ENCODE measurements at regions of chr11 and their contacts with region 1.

Region 1: DNA sequence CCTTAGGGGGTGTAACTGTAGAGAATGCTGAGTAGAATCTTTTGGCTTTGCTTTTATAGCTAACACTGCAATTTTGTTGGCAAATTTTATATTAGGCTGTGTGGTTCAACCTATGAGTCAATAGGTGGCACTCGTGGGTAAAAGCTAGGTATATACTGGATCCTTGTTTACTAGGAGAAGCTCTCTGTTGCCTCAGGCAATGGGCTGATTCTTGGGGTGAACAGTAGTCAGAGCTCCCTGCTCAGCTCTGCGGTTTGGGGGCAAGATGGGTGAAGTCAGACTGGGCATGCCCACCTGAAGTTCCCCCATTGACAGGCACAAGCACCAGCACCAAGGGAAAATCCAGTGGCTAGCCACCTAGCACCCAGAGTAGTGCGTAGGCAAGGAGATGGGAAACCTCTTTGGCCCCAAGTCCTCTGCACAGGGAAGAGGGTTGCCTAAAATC is 238.7 kb downstream of the FAM181B start:
- DNase-seq: peak in 1 of 2 experiments; percentile 51
- H3K4me3 ChIP-seq: no peak overlapping the region
- H3K27ac ChIP-seq: peak overlapping the region; percentile 62; the same call in 1 of the 2 replicates
- H3K4me1 ChIP-seq: 0 out of 7 replicates have a peak, but pooled peaks cover 0 to 2% (median 0%) of the 10 kb centered on the region in 4 experiments
- H3K27me3 ChIP-seq: no peaks in the 10 kb centered on the region
- CTCF ChIP-seq: peak in 2 of 3 experiments; percentile 47 to 66; a peak in 3 of 4 replicates
- EP300 ChIP-seq: no peak
- POLR2A ChIP-seq: no peak
- RAD21 ChIP-seq: peak; percentile 58 to 64

Region 2: GRCh38 chr11:82507288-82507687 is 12.3 kb after region 1 on chr11:
- CTCF ChIA-PET with region 1: interaction called, 18 read pairs
- POLR2A ChIA-PET with region 1: no interaction called
- DNase-seq: no peak
- H3K4me3 ChIP-seq: no peak overlapping the region
- H3K27ac ChIP-seq: no peak overlapping the region
- H3K4me1 ChIP-seq: no peaks in the 10 kb centered on the region
- H3K27me3 ChIP-seq: no peaks in the 10 kb centered on the region
- CTCF ChIP-seq: no peak
- EP300 ChIP-seq: no peak
- POLR2A ChIP-seq: no peak
- RAD21 ChIP-seq: no peak

Region 3: DNA sequence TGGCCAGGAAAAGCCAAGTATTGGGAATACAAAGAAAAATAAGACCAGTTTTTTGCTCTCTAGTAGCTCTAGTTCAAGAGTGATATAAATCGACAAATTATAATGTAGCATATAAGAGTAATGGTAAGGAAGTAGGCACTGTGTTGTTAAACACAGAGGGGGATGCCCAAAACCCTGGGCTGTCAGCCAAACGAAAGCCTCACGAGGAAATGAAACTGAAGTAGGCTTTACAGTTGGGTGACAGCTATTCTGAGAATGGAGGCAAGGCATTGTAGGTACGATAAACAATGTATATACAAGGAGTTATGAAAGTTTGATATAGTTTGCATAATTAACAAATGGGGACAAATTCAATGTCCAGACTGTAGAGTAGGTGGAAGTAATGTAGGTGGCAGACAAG is 62.3 kb after region 1 on chr11:
- CTCF ChIA-PET with region 1: interaction called, 12 read pairs
- POLR2A ChIA-PET with region 1: no interaction called
- DNase-seq: no peak
- H3K4me3 ChIP-seq: no peak overlapping the region
- H3K27ac ChIP-seq: no peak overlapping the region
- H3K4me1 ChIP-seq: no peaks in the 10 kb centered on the region
- H3K27me3 ChIP-seq: no peaks in the 10 kb centered on the region
- CTCF ChIP-seq: no peak
- EP300 ChIP-seq: no peak
- POLR2A ChIP-seq: no peak
- RAD21 ChIP-seq: no peak